ENCODE measurements at regions of chr2 and their contacts with region 1.

Region 1: GRCh38 chr2:177164584-177165052 is 48.0 kb upstream of the HNRNPA3 start:
- DNase-seq: peak; percentile 74
- H3K4me3 ChIP-seq: peak overlapping the region; percentile 8 to 22
- H3K27ac ChIP-seq: peak overlapping the region; percentile 69 to 78
- H3K4me1 ChIP-seq: no peaks in the 10 kb centered on the region
- H3K27me3 ChIP-seq: no peaks in the 10 kb centered on the region
- CTCF ChIP-seq: peak; percentile 98 to 100 (median 100)
- POLR2A ChIP-seq: no peak

Region 2: GRCh38 chr2:176978921-176979320 is 185.7 kb before region 1 on chr2:
- intact Hi-C with region 1: no loop called
- DNase-seq: no peak
- H3K4me3 ChIP-seq: no peak overlapping the region
- H3K27ac ChIP-seq: no peak overlapping the region
- H3K4me1 ChIP-seq: no peaks in the 10 kb centered on the region
- H3K27me3 ChIP-seq: peaks cover 2% of the 10 kb centered on the region
- CTCF ChIP-seq: no peak
- POLR2A ChIP-seq: no peak

Region 3: GRCh38 chr2:177263451-177264208 is 99.0 kb after region 1 on chr2:
- intact Hi-C with region 1: loop called (anchors 2 kb)
- DNase-seq: peak; percentile 98
- H3K4me3 ChIP-seq: peak overlapping the region; percentile 95 to 99
- H3K27ac ChIP-seq: peak overlapping the region; percentile 99 to 100
- H3K4me1 ChIP-seq: no peaks in the 10 kb centered on the region
- H3K27me3 ChIP-seq: no peaks in the 10 kb centered on the region
- CTCF ChIP-seq: peak; percentile 64 to 96 (median 91)
- POLR2A ChIP-seq: peak; percentile 65

Region 4: DNA sequence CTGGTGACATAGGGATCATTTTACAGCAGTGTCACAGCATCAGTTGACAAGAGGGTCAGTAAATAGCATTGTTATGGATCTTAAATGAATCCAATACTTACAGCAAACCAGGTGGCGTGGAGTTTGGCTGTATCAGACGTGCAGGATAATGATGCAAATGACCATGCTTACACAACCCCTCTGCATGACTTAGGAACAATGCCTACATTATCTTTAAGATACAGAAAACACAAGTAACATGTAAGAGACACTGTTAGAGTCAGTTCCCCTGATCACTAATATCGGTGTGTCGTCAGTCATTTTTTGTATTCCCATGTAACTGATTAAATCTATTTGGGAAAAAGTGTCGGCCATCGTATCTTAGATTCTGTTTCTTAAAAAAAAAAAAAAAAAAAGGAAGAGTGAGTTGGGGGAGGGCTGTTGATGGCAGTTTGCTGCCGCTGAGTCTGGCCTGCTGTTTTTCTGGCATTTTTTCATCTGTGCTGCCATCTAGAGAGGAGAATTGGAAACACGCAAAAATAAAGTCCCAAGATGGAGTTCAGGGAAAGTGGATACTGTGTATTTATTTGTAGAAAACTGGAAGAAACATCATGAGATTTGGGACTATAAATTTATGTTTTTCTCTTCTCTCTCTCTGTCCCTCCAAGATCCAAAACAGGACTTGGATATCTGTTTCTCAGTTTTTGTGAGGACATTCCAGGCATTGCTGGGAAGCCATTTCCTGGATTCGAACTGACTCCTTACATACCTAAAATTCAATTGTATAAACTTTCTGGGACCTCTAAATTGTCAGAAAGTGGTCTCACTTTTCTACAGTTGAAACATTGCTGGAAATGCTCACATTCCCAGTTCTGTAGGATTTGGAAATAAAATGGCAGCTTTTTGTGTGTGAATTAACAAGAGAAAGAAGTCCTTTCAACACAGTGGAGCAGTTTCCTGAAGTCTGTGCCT is 167.7 kb after region 1 on chr2:
- intact Hi-C with region 1: loop called (anchors 2 kb)
- DNase-seq: peak; percentile 47
- H3K4me3 ChIP-seq: no peak overlapping the region
- H3K27ac ChIP-seq: no peak overlapping the region
- H3K4me1 ChIP-seq: no peaks in the 10 kb centered on the region
- H3K27me3 ChIP-seq: no peaks in the 10 kb centered on the region
- CTCF ChIP-seq: peak; percentile 30 to 76 (median 66)
- POLR2A ChIP-seq: no peak

Region 5: GRCh38 chr2:177543007-177543760 is 378.6 kb after region 1 on chr2:
- intact Hi-C with region 1: no loop called
- DNase-seq: no peak
- H3K4me3 ChIP-seq: no peak overlapping the region
- H3K27ac ChIP-seq: no peak overlapping the region
- H3K4me1 ChIP-seq: no peaks in the 10 kb centered on the region
- H3K27me3 ChIP-seq: no peaks in the 10 kb centered on the region
- CTCF ChIP-seq: no peak
- POLR2A ChIP-seq: no peak

Region 6: DNA sequence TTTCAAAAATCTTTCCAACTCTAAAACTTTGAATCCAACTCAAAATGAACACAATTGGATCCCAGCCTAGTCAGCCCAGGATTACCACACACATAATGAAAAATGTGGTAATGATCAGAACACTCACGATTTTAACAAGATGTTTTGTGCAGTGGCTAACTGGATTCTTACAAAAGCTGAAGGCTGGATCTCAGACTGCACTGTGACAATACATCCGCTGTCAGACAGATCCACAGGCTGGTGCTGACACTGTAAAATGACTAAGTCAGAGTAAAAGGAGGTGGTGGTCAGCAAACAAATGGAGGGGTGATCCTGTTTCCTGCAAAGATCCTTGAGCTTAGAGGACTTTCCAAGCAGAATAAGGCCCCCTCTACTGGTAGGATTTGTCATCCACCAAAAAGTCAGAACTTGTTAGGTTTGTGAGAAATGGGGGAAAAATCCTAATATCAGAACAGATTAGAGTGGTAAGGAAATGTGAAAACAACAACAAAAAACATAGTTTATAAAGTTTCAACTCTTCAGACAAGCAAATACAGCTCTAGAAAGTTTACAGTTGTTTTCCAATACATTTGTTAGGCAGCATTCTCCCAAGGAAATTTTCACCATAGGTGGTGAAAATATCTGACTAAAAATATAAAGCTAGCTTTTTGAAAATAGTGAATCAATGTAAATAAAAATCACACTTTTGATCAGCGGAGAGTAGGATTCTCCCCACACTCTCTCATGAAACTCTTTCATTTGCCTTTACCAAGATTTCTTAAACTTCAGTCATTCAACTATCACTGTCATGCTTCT is 439.9 kb after region 1 on chr2:
- intact Hi-C with region 1: loop called (anchors 5 kb)
- DNase-seq: no peak
- H3K4me3 ChIP-seq: no peak overlapping the region
- H3K27ac ChIP-seq: no peak overlapping the region
- H3K4me1 ChIP-seq: no peaks in the 10 kb centered on the region
- H3K27me3 ChIP-seq: no peaks in the 10 kb centered on the region
- CTCF ChIP-seq: peak; percentile 15 to 57 (median 36)
- POLR2A ChIP-seq: no peak

Region 7: GRCh38 chr2:177758591-177759371 is 594.2 kb after region 1 on chr2:
- intact Hi-C with region 1: loop called (anchors 10 kb)
- DNase-seq: no peak
- H3K4me3 ChIP-seq: no peak overlapping the region
- H3K27ac ChIP-seq: no peak overlapping the region
- H3K4me1 ChIP-seq: no peaks in the 10 kb centered on the region
- H3K27me3 ChIP-seq: no peaks in the 10 kb centered on the region
- CTCF ChIP-seq: peak in 3 of 4 experiments; percentile 13 to 63 (median 37)
- POLR2A ChIP-seq: no peak